ENCODE measurements at regions of chr1 and their contacts with region 1.

Region 1: GRCh38 chr1:222455188-222455879 is 92.6 kb downstream of the HHIPL2 start:
- DNase-seq: peak; percentile 91
- ATAC-seq: peak; percentile 99
- H3K4me3 Mint-ChIP-seq: no peak overlapping the region
- H3K27ac Mint-ChIP-seq: peak overlapping the region; percentile 21
- H3K4me1 Mint-ChIP-seq: peaks cover 16% of the 10 kb centered on the region
- H3K27me3 Mint-ChIP-seq: no peaks in the 10 kb centered on the region

Region 2: DNA sequence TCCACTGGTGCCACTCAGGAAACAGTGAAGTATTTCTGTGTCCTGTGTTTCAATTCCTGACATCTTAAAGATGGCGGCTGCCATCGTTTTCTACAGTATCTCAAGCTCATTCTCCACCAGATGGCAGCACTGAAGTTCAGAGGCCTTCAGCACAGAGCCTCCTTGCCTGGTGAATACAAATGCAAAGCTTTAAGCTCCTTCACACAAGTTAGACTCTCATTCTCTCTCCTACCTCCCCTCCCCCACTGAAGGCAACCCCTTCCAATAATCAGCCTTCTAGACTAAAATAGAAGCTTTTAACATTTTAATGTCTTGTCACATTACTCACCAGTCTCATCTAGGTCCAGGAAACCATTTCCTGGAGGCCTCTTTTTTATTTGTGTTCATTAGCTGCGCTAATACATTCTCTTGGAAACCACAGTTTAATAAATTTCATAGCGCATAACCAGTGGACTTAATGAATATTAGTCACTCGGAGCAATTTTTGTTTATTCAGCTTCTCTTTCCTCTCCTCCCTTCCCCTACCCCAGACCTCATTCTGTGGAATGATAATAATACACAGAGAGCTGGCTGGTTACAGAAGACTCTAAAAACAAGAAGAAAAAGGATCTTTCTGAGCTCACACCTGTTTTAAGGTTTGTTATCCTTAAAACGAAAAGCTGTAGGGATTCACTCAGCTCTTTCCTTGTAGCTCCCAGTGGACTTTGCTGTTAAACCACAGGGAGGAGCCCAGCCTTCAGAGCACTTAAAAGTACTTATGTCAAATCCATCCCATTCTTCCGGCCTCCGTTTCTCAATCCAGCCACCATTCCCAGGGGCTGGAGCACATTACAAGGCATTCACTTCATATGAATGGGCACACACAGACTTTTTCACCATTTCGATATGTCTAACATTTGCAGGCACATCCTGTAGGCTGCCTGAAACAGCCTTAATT is 1191.2 kb before region 1 on chr1:
- CTCF ChIA-PET with region 1: interaction called, 5 read pairs
- POLR2A ChIA-PET with region 1: no interaction called
- intact Hi-C with region 1: loop called in 1 of 2 experiments (anchors 5 kb)
- DNase-seq: peak; percentile 62
- ATAC-seq: peak; percentile 66
- H3K4me3 Mint-ChIP-seq: no peak overlapping the region
- H3K27ac Mint-ChIP-seq: no peak overlapping the region
- H3K4me1 Mint-ChIP-seq: no peaks in the 10 kb centered on the region
- H3K27me3 Mint-ChIP-seq: peaks cover 10% of the 10 kb centered on the region

Region 3: GRCh38 chr1:221839796-221840395 is 615.4 kb before region 1 on chr1:
- CTCF ChIA-PET with region 1: no interaction called
- POLR2A ChIA-PET with region 1: no interaction called
- intact Hi-C with region 1: loop called in 1 of 2 experiments (anchors 10 kb)
- DNase-seq: peak; percentile 85
- ATAC-seq: peak; percentile 98
- H3K4me3 Mint-ChIP-seq: no peak overlapping the region
- H3K27ac Mint-ChIP-seq: peak overlapping the region; percentile 85
- H3K4me1 Mint-ChIP-seq: peaks cover 38% of the 10 kb centered on the region
- H3K27me3 Mint-ChIP-seq: peaks cover 6% of the 10 kb centered on the region

Region 4: DNA sequence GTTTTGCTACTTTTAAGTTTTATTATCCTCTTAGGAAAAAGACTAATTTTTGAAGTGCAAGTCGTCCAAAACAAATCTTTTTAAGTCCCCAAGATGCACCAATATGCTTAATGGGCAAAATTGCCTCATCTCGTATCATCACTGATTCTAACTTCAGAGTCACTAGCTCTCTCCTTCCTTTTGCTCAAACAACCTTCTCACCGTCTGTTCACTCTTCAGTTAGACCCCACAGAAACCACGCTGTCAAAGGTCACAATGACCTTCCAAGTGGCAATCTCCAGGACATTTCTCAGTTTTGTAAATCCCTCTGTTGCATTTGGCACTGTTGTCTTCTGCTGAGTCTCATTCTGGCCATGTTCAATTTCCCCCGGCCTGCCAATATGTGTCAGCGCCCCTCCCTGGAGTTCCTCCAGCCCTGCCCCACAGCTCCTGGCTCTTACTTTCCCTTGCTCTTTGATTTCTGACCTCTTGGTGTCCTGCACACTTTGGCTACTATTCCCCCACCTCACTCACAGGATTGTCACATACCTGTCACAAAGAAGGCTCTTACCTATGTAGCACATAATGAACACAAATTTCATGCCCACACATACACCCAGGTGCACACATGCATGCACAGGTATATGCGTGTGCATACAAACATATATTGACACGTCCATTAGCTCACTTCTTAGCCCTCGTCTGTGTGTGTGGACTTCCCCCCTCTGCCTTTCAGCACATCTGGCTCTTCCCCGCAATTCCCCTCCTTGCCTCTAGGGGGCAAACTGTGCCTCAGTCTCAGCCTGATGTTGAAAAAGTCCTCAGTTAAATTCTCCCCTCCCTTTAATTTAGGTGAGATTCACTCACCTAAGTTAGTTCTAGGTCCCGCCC is 359.5 kb before region 1 on chr1:
- CTCF ChIA-PET with region 1: interaction called, 19 read pairs
- POLR2A ChIA-PET with region 1: no interaction called
- intact Hi-C with region 1: loop called (anchors 1 kb)
- DNase-seq: peak; percentile 75
- ATAC-seq: peak; percentile 78
- H3K4me3 Mint-ChIP-seq: no peak overlapping the region
- H3K27ac Mint-ChIP-seq: no peak overlapping the region
- H3K4me1 Mint-ChIP-seq: no peaks in the 10 kb centered on the region
- H3K27me3 Mint-ChIP-seq: no peaks in the 10 kb centered on the region

Region 5: GRCh38 chr1:222301652-222302051 is 153.7 kb before region 1 on chr1:
- CTCF ChIA-PET with region 1: no interaction called
- POLR2A ChIA-PET with region 1: no interaction called
- intact Hi-C with region 1: no loop called
- DNase-seq: no peak
- ATAC-seq: no peak
- H3K4me3 Mint-ChIP-seq: no peak overlapping the region
- H3K27ac Mint-ChIP-seq: no peak overlapping the region
- H3K4me1 Mint-ChIP-seq: peaks cover 12% of the 10 kb centered on the region
- H3K27me3 Mint-ChIP-seq: peaks cover 2% of the 10 kb centered on the region

Region 6: GRCh38 chr1:222334026-222334680 is 121.2 kb before region 1 on chr1:
- CTCF ChIA-PET with region 1: no interaction called
- POLR2A ChIA-PET with region 1: no interaction called
- intact Hi-C with region 1: loop called in 1 of 2 experiments (anchors 10 kb)
- DNase-seq: peak; percentile 48
- ATAC-seq: peak; percentile 84
- H3K4me3 Mint-ChIP-seq: no peak overlapping the region
- H3K27ac Mint-ChIP-seq: no peak overlapping the region
- H3K4me1 Mint-ChIP-seq: peaks cover 3% of the 10 kb centered on the region
- H3K27me3 Mint-ChIP-seq: no peaks in the 10 kb centered on the region

Region 7: GRCh38 chr1:222357252-222357651 is 98.1 kb before region 1 on chr1:
- CTCF ChIA-PET with region 1: no interaction called
- POLR2A ChIA-PET with region 1: no interaction called
- intact Hi-C with region 1: no loop called
- DNase-seq: no peak
- ATAC-seq: no peak
- H3K4me3 Mint-ChIP-seq: no peak overlapping the region
- H3K27ac Mint-ChIP-seq: no peak overlapping the region
- H3K4me1 Mint-ChIP-seq: no peaks in the 10 kb centered on the region
- H3K27me3 Mint-ChIP-seq: no peaks in the 10 kb centered on the region

Region 8: DNA sequence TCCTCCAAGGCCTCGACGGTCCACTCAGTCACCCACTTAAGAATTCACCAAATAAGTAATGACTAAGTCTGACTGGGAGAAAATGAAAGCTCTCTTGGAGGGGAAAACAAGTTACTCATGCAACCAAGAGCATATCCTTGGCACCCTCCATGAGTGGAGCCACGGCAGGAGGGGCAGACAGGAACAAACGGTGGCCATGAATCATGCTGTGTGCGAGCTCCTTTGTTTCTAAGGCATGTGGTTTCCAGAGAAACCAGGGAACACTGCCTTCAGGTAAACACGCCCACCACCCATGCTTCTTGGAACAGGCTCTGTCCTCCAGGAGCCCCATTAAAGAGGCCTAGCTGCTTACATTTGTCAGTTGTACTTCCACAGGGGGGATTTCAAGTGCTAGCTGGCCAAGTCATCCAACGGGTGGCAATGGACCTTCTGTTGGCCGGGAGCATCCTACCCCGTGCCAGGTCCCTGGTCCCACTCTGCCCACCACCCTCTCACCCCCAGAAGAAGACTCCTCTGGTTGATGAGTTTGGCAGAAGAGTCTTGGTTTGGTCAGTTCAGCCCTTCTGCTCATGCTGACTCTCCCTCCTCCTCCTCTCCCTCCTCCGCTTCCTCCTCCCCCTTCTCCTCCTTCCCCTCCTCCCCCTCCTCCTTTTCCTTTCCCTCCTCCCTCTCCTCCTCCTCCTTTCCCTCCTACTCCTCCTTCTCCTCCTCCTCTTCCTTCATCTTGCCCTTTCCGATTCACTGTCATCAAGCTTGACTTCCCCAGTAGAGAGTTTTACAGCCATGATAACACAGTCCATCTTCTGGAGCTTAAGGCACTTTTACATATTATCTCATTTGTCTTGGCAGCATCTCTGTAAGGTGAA is 1045.5 kb after region 1 on chr1:
- CTCF ChIA-PET with region 1: no interaction called
- POLR2A ChIA-PET with region 1: no interaction called
- intact Hi-C with region 1: no loop called
- DNase-seq: peak; percentile 61
- ATAC-seq: peak; percentile 93
- H3K4me3 Mint-ChIP-seq: no peak overlapping the region
- H3K27ac Mint-ChIP-seq: peak overlapping the region; percentile 48
- H3K4me1 Mint-ChIP-seq: peaks cover 11% of the 10 kb centered on the region
- H3K27me3 Mint-ChIP-seq: no peaks in the 10 kb centered on the region

Measured in activated CD4-positive, alpha-beta T cell treated with anti-CD3 and anti-CD28 coated beads for 36 hours (primary cell).